Heart left ventricle (tissue), 16 donors: ENCODE measurements at regions of chr1 and their contacts with region 1.

Region 1: DNA sequence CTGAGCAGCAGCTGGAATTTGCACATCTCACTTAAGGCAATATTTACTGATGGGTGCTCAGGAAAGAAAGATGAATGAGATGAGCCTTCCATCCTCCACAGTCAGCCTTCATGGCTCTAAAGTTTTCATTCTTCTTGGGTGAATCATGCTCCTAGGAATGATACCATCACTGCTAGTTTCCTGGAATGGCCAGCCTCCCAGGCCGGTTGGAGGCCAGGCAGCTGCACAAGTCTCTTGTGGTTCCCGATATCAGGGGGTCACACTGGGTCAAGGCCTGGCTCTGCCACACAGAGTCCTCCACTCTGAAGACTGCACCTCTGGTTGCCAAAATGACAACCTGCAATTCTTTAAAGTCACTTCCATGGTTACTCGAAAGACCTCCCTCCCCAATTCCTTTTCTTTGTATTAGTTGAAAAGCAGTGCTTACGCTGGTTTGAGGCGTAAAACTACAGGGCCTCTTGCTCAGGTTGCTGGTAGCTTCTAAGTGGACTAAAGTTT is 46.2 kb upstream of the PALMD start:
- DNase-seq: peak; percentile 24 to 69 (median 66)
- ATAC-seq: peak in 3 of 4 donors; percentile 55 to 90 (median 90)
- H3K4me3 ChIP-seq: no peak overlapping the region
- H3K27ac ChIP-seq: peak overlapping the region in 9 of 12 donors; percentile 0 to 82 (median 55)
- H3K4me1 ChIP-seq: peaks cover 0 to 45% (median 11%) of the 10 kb centered on the region in 12 donors
- H3K27me3 ChIP-seq: no peaks in the 10 kb centered on the region
- CTCF ChIP-seq: no peak
- POLR2A ChIP-seq: no peak

Region 2: GRCh38 chr1:98119796-98120195 is 1479.9 kb before region 1 on chr1:
- intact Hi-C with region 1: no loop called
- DNase-seq: peak in 1 of 5 donors; percentile 6
- ATAC-seq: no peak
- H3K4me3 ChIP-seq: no peak overlapping the region
- H3K27ac ChIP-seq: no peak overlapping the region
- H3K4me1 ChIP-seq: no peaks in the 10 kb centered on the region
- H3K27me3 ChIP-seq: no peaks in the 10 kb centered on the region
- CTCF ChIP-seq: no peak
- POLR2A ChIP-seq: no peak

Region 3: DNA sequence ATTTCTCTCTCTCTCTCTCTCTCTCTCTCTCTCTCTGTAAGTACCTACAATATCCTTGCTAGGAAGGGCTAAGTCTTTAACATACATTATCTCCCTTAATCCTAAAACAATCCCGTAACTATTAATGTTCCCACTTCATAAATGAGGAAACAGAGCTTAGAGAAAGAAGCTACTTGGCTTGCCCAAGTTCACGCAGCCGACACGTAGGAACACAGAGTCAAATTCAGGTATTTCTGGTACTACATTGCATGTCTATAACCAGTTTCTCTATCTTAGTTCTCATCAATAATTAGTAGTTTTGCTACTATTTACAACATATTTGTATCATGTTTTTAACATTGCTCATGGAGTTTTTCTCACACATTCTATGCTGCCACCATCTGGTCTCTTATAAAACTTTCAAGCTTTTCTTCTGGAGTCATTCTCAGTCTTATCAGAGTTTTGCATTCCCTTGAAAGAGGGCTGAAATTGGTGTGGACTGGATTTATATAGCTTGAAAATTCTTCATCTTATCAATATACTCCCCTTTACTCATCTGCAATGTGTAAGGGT is 72.7 kb before region 1 on chr1:
- intact Hi-C with region 1: loop called in 1 of 10 experiments (anchors 5 kb)
- DNase-seq: no peak
- ATAC-seq: peak in 1 of 4 donors; percentile 42
- H3K4me3 ChIP-seq: no peak overlapping the region
- H3K27ac ChIP-seq: no peak overlapping the region
- H3K4me1 ChIP-seq: peaks cover 0 to 23% (median 3%) of the 10 kb centered on the region in 12 donors
- H3K27me3 ChIP-seq: no peaks in the 10 kb centered on the region
- CTCF ChIP-seq: peak in 11 of 12 donors; percentile 6 to 63 (median 42)
- POLR2A ChIP-seq: no peak

Region 4: DNA sequence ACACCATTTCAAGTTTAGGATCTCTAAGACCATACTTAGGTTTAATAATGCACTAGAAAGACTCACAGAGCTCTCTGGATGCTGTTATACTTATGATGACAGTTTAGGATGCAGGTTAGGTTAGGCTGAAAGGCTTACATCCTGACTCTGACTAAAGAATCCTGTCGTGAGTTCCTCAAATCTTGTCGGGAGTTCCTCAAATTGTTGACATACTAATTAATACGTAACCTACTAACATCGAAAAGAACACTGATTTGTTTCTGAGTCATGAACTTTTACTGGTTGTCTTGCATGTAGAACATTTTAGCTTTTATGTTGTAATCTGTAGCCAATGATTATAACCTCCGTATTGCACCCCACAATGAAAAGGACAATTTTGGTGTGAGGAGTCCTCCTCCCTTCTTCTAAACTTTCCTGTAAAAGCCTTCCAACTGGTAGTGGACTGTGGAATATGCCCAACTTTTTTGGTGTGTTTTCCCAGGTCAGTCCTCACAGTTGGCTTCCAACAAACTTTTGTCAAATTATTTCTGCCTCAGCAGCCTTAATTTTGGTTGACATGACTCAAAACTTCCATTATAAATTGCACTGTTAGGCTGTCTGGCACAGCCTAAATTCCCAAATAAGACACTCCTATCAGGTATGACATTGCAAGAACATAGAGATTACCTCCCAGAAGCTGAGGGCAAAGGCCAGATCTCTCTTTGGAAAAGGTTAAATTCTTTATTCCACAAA is 61.7 kb before region 1 on chr1:
- intact Hi-C with region 1: no loop called
- DNase-seq: no peak
- ATAC-seq: no peak
- H3K4me3 ChIP-seq: no peak overlapping the region
- H3K27ac ChIP-seq: peak overlapping the region in 2 of 12 donors; percentile 7 to 9
- H3K4me1 ChIP-seq: peaks cover 0 to 33% (median 21%) of the 10 kb centered on the region in 12 donors
- H3K27me3 ChIP-seq: no peaks in the 10 kb centered on the region
- CTCF ChIP-seq: no peak
- POLR2A ChIP-seq: no peak

Region 5: DNA sequence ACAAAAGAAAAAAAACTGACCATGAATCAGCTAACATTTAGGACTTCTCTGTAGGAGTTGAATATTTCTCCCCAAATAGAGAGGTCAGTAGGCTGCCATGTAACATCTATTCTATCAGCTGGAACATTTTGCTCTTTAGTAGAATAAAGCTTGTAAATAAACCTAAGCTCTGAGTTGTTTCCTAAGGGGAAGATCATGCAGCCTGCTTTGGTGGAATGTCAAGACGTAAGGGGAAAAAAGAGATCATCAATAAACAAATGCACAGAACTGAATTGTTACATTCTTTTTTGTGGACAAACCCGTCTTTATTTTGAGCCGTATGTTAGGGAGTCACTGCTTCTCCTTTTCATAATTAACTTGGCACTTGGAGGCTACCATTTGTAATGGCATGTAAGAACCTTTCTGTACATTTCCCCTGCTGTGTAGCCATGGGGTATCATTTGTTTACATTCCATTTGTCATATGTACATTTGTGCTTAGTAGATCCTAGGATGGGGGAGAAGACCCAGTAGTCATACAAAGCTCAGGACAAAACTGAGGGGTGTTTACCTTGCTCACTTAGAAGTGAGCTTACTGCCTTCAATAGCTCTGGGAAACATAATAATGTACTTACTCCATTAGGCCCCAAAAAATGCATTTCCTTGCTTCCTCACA is 35.4 kb after region 1 on chr1:
- intact Hi-C with region 1: loop called in 5 of 10 experiments (anchors 2 to 10 kb)
- DNase-seq: no peak
- ATAC-seq: no peak
- H3K4me3 ChIP-seq: no peak overlapping the region
- H3K27ac ChIP-seq: peak overlapping the region in 4 of 12 donors; percentile 0 to 41 (median 10)
- H3K4me1 ChIP-seq: peaks cover 0 to 33% (median 13%) of the 10 kb centered on the region in 12 donors
- H3K27me3 ChIP-seq: no peaks in the 10 kb centered on the region
- CTCF ChIP-seq: no peak
- POLR2A ChIP-seq: no peak

Region 6: DNA sequence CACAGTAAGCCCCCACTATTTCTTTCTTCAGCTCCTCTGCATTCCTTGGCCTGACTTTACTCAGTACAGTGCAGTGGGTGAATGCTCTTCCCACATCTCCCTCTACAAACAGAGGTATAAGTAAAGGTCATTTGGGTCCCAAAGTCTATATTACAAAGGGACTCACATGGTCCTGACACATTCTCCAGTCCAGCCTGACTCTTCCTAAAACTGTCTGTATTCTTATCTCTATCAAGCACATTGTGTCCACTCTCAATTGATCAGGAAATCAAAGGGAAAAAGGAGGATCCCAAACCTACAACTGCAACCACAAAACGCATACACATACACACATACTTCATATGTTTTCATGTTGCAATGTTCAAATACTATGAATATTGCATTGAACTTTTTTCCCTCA is 117.3 kb after region 1 on chr1:
- intact Hi-C with region 1: no loop called
- DNase-seq: no peak
- ATAC-seq: no peak
- H3K4me3 ChIP-seq: no peak overlapping the region
- H3K27ac ChIP-seq: no peak overlapping the region
- H3K4me1 ChIP-seq: no peaks in the 10 kb centered on the region
- H3K27me3 ChIP-seq: no peaks in the 10 kb centered on the region
- CTCF ChIP-seq: no peak
- POLR2A ChIP-seq: no peak